ENCODE measurements at regions of chr20 and their contacts with region 1.

Region 1: GRCh38 chr20:61775399-61775798 is 290.3 kb downstream of the TAF4 start:
- DNase-seq: no peak
- H3K4me3 ChIP-seq: no peak overlapping the region
- H3K27ac ChIP-seq: no peak overlapping the region
- H3K4me1 ChIP-seq: no peaks in the 10 kb centered on the region
- H3K27me3 ChIP-seq: peaks cover 0 to 7% of the 10 kb centered on the region in 2 donors
- CTCF ChIP-seq: no peak

Region 2: GRCh38 chr20:61802721-61803311 is 27.4 kb after region 1 on chr20:
- intact Hi-C with region 1: loop called (anchors 1 kb)
- DNase-seq: no peak
- H3K4me3 ChIP-seq: no peak overlapping the region
- H3K27ac ChIP-seq: no peak overlapping the region
- H3K4me1 ChIP-seq: peaks cover 0 to 18% (median 10%) of the 10 kb centered on the region in 4 donors
- H3K27me3 ChIP-seq: peaks cover 0 to 85% of the 10 kb centered on the region in 2 donors
- CTCF ChIP-seq: no peak

Measured in tibial artery (tissue), 4 donors.